Activated CD4-positive, alpha-beta T cell treated with anti-CD3 and anti-CD28 coated beads, Interleukin-2, amount 10 ng/mL, durations not matched to agents 24 days and 14 days (primary cell): ENCODE measurements at regions of chr11 and their contacts with region 1.

Region 1: GRCh38 chr11:59668950-59669610 is at the start of gene PATL1:
- DNase-seq: peak; percentile 100
- H3K4me3 Mint-ChIP-seq: peak within 1 kb of the TSS; percentile 98
- H3K27ac Mint-ChIP-seq: peak within 1 kb of the TSS; percentile 97
- H3K4me1 Mint-ChIP-seq: peaks cover 40% of the 10 kb centered on the region
- H3K27me3 Mint-ChIP-seq: peaks cover 1% of the 10 kb centered on the region
- total RNA-seq, gene PATL1: 72.4 and 76.1 TPM in 2 replicates

Region 2: GRCh38 chr11:59106363-59107336 is 562.4 kb before region 1 on chr11 and contains the start of gene FAM111B:
- intact Hi-C with region 1: loop called (anchors 2 kb)
- DNase-seq: peak; percentile 93
- H3K4me3 Mint-ChIP-seq: peak within 1 kb of the TSS; percentile 94
- H3K27ac Mint-ChIP-seq: peak within 1 kb of the TSS; percentile 85
- H3K4me1 Mint-ChIP-seq: peaks cover 66% of the 10 kb centered on the region
- H3K27me3 Mint-ChIP-seq: no peaks in the 10 kb centered on the region
- total RNA-seq, gene FAM111B: 68.4 and 70.1 TPM in 2 replicates

Region 3: DNA sequence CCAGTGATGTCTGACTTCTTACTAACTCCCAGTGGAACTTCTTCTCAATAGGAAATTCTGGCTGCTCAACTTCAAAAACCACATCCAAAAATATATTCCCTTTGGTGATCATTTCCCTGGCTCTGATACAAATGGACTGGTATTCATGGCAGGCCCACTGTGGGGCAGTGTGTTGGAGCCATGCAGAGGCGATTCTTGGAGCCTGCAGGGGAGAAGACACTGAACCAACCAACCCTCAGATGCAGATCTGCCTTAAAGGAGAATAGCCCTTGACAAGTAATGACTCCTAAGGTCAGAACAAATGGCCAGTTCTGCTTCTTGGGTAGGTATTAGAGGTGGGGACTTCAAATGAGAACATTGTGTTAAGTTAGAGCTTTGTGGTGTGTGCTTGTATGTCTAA is 145.5 kb before region 1 on chr11:
- intact Hi-C with region 1: no loop called
- DNase-seq: no peak
- H3K4me3 Mint-ChIP-seq: no peak overlapping the region
- H3K27ac Mint-ChIP-seq: no peak overlapping the region
- H3K4me1 Mint-ChIP-seq: no peaks in the 10 kb centered on the region
- H3K27me3 Mint-ChIP-seq: peaks cover 31% of the 10 kb centered on the region

Region 4: GRCh38 chr11:59534676-59535075 is 134.4 kb before region 1 on chr11:
- intact Hi-C with region 1: loop called (anchors 5 kb)
- DNase-seq: no peak
- H3K4me3 Mint-ChIP-seq: no peak overlapping the region
- H3K27ac Mint-ChIP-seq: no peak overlapping the region
- H3K4me1 Mint-ChIP-seq: peaks cover 18% of the 10 kb centered on the region
- H3K27me3 Mint-ChIP-seq: peaks cover 3% of the 10 kb centered on the region

Region 5: DNA sequence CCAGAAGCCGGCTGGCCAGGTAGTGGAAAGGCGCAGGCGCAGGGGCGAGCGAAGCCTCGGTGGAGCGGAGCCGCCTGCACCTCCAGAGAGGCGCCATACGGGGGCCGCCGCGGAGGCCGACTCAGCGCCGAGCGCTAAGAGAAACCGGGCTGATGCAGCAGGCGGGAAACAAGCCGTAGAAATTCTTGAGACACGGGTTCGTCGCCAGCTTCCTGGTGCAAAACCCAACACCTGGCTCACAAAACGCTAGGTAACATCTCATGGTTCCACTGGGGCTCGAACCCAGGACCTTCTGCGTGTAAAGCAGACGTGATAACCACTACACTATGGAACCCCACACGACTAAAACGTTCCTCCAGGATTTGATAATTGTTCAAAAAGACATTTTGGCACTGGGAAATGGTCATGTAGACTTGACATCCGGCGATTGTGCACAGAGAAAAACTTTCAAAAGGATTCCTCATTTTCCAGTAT is 118.7 kb before region 1 on chr11:
- intact Hi-C with region 1: loop called (anchors 1 kb)
- DNase-seq: peak; percentile 95
- H3K4me3 Mint-ChIP-seq: peak overlapping the region; percentile 85
- H3K27ac Mint-ChIP-seq: peak overlapping the region; percentile 88
- H3K4me1 Mint-ChIP-seq: peaks cover 22% of the 10 kb centered on the region
- H3K27me3 Mint-ChIP-seq: peaks cover 15% of the 10 kb centered on the region

Region 6: DNA sequence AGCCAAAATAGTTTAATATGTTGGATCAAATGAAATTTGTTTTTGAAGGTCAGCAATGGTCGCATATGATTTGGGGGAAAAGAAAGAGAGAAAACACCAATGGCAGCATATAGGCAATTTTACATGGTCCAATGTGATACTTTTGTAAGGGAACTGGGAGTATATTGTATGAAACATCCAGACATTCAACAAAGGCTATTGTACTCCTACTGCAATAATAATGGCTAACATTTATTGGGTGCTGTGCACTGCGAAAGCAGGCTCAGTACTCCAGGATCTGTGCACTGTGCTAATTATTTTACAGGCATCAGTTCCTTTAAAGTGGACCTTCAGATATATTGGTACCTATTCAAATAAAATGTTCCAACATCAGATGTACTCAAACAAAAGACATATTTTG is 50.5 kb after region 1 on chr11:
- intact Hi-C with region 1: no loop called
- DNase-seq: no peak
- H3K4me3 Mint-ChIP-seq: no peak overlapping the region
- H3K27ac Mint-ChIP-seq: no peak overlapping the region
- H3K4me1 Mint-ChIP-seq: no peaks in the 10 kb centered on the region
- H3K27me3 Mint-ChIP-seq: peaks cover 22% of the 10 kb centered on the region

Region 7: GRCh38 chr11:59810189-59810910 is 141.3 kb after region 1 on chr11 and contains the start of gene MRPL16:
- intact Hi-C with region 1: loop called (anchors 2 kb)
- DNase-seq: peak; percentile 95
- H3K4me3 Mint-ChIP-seq: peak within 1 kb of the TSS; percentile 92
- H3K27ac Mint-ChIP-seq: peak within 1 kb of the TSS; percentile 91
- H3K4me1 Mint-ChIP-seq: peaks cover 22% of the 10 kb centered on the region
- H3K27me3 Mint-ChIP-seq: no peaks in the 10 kb centered on the region
- total RNA-seq, gene MRPL16: 96.8 and 97.4 TPM in 2 replicates

Region 8: DNA sequence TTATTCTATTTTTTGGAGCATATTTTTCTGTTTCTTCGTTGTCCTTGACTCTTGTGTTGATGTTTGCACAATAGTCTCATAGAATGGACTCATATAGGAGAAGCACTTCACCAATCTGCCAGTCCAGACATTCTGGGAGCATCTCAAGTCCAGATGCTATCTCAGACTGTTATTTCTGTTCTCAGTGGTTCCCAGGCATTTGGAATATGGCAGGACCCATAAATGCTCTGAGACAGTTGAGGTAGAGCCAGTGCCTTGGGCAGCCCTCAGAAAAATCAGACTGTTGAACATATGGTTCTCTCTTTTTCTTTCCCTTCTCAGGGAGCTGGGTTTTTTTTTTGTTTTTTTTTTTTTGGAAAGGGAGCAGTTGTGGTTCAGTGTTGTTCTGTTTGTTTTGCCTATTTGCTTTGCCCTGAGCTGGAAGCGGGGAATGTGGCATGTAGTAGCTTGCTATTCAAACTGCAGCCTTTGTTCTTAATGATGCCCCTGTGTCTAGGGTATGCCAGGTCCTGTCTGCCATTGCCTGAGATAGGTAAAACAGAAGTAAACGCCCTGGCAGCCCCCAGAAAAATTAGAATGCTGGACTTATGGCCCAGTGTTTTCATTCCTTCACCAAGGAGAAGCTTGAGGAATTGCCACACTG is 415.7 kb after region 1 on chr11:
- intact Hi-C with region 1: no loop called
- DNase-seq: no peak
- H3K4me3 Mint-ChIP-seq: no peak overlapping the region
- H3K27ac Mint-ChIP-seq: no peak overlapping the region
- H3K4me1 Mint-ChIP-seq: no peaks in the 10 kb centered on the region
- H3K27me3 Mint-ChIP-seq: peaks cover 3% of the 10 kb centered on the region